ENCODE measurements at regions of chr4 and their contacts with region 1.

Region 1: DNA sequence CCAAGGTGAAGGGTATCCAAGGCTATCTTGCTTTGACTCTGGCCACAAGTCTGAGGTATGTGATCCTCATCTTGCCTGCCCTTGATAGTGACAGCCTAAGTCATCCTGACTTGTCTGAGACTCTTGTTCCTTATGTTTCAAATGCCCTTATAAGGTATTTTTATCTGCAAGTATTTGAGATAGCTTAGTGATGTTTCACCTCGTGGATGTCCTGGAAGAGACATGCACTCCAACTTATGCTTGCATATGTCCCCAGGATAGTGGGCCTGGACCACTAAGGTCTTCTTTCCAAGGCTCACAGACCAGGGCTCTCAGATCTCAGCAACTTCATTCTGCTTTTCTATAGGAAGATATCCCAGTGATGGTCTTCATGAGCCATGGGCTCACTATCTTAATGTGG is 120.5 kb upstream of the WDR1 start:
- DNase-seq: no peak
- ATAC-seq: no peak
- H3K4me3 ChIP-seq: no peak overlapping the region
- H3K27ac ChIP-seq: no peak overlapping the region
- H3K4me1 ChIP-seq: no peaks in the 10 kb centered on the region
- H3K27me3 ChIP-seq: no peaks in the 10 kb centered on the region; the same call in 1 of the 2 replicates
- CTCF ChIP-seq: no peak
- POLR2A ChIP-seq: no peak
- RAD21 ChIP-seq: no peak

Region 2: GRCh38 chr4:10204401-10205058 is 32.6 kb before region 1 on chr4:
- CTCF ChIA-PET with region 1: no interaction called
- POLR2A ChIA-PET with region 1: no interaction called
- dilution Hi-C with region 1: no loop called
- in situ Hi-C with region 1: no loop called
- intact Hi-C with region 1: loop called (anchors 1 kb)
- DNase-seq: no peak
- ATAC-seq: no peak
- H3K4me3 ChIP-seq: no peak overlapping the region
- H3K27ac ChIP-seq: no peak overlapping the region
- H3K4me1 ChIP-seq: no peaks in the 10 kb centered on the region
- H3K27me3 ChIP-seq: no peaks in the 10 kb centered on the region
- CTCF ChIP-seq: no peak
- POLR2A ChIP-seq: no peak
- RAD21 ChIP-seq: no peak